Posterior vena cava (tissue), 2 donors: ENCODE measurements at regions of chr2 and their contacts with region 1.

Region 1: GRCh38 chr2:203080447-203081045 is 65.9 kb downstream of the NBEAL1 start:
- DNase-seq: no peak

Region 2: DNA sequence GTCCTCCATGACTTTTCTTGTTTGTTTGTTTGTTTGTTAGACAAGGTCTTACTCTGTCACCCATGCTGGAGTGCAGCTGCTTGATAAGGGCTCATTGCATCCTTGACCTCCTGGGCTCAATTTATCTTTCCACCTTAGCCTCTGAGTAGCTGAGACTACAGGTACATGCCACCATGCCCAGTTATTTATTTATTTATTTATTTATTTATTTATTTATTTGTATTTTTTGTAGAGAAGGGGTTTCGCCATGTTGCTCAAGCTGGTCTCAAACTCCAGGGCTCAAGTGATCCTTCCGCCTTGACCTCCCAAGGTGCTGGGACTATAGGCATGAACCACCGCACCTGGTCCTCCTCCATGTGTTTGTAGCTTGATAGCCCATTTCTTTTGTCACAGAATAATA is 28.0 kb before region 1 on chr2:
- intact Hi-C with region 1: loop called in 1 of 2 experiments (anchors 1 kb)
- DNase-seq: no peak

Region 3: GRCh38 chr2:203567691-203568090 is 487.1 kb after region 1 on chr2:
- intact Hi-C with region 1: no loop called
- DNase-seq: no peak